H1 (cell line): ENCODE measurements at regions of chr19 and their contacts with region 1.

Region 1: DNA sequence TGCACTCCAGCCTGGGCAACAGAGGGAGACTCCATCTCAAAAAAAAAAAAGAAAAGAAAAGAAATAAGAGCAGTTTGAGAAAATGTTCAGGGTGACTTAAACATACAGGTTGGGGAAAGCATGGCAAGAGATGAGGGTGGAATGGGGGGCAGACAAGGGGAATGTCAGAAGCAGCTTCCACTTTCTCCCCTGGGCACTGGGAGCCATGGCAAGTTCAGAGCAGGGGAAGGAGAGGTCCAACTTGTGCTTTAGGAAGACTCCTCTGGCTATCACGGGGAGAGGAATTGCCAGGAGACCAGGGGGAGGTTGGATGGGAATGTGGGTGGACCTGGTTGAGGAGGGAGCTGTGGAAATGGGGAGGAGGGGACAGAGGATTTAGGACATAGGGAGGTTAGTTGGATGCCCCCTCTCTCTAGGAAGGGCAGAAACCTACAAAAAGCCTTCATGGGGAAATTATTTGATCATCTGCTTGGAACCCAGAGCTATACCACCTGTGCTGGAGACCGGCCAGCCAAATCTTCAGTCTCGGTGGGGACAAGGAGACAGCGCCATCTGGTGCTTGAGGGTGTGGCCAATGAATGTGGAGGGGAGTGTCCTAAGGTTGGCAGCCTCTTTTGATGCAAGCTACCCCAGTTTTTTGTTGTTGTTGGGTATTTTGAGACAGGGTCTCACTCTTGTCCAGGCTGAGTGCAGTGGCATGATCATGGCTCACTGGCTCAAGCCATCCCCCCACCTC is 7.3 kb upstream of the STRN4 start:
- DNase-seq: peak in 1 of 2 experiments; percentile 78
- H3K4me3 ChIP-seq: no peak overlapping the region
- H3K27ac ChIP-seq: no peak overlapping the region
- H3K4me1 ChIP-seq: no peaks in the 10 kb centered on the region; a peak in 2 of 7 replicates
- H3K27me3 ChIP-seq: no peaks in the 10 kb centered on the region
- CTCF ChIP-seq: peak; percentile 73 to 80 (median 78)
- EP300 ChIP-seq: no peak
- POLR2A ChIP-seq: no peak
- RAD21 ChIP-seq: peak; percentile 45 to 53

Region 2: DNA sequence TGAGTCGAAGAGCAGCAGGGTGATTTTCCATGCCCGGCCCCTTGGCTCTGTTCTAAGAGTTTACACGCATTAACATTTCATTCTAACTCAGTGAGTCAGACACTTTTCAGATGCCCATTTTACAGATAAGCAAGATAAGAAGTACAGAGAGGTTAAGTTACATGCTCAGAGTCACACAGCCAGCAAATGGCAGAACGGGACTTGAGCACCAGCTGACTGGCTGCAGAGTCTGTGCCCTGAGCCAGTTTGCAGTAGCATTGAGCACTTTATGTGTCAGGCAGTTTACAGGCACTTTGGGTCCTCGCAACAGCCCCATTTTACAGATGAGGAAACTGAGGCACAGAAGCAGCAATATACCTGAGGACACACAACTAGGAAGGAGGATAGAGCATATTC is 359.2 kb before region 1 on chr19:
- CTCF ChIA-PET with region 1: no interaction called
- POLR2A ChIA-PET with region 1: no interaction called
- DNase-seq: no peak
- H3K4me3 ChIP-seq: no peak overlapping the region
- H3K27ac ChIP-seq: no peak overlapping the region
- H3K4me1 ChIP-seq: no peaks in the 10 kb centered on the region; a peak in 2 of 7 replicates
- H3K27me3 ChIP-seq: no peaks in the 10 kb centered on the region
- CTCF ChIP-seq: no peak
- EP300 ChIP-seq: no peak
- POLR2A ChIP-seq: no peak
- RAD21 ChIP-seq: no peak

Region 3: DNA sequence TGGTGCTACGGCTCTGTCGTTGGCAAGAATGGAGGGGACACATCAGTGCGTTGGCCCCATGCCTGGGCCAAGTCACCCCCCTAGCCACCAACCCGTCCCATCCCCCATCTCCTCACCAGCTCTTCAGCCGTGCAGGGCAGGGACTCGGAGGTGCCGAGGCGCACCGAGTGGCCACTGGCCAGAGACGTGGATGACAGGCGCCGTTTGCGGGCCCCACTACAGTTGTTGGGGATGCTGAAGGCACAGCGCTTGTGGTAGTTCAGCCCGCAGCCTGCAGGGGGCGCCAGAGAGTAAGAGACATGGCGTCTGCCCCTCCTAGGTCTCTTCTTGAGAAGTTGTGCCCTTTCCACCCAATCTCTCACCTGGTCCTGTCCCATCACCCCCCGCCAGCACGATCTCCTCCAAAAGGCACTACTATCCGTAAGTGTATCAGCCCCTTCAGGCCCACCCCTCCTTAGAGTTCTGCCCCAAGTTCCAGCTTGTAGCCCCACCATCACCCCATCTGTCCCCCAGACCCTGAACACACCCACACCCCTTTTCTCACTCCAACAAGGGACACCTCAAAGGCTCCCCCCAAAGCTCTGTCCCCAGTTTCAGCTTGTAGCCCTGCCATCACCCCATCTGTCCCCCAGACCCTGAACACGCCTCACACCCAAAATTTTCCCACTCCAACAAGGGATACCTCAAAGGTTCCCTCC is 49.1 kb before region 1 on chr19:
- CTCF ChIA-PET with region 1: interaction called, 29 read pairs
- POLR2A ChIA-PET with region 1: no interaction called
- DNase-seq: peak in 1 of 2 experiments; percentile 100
- H3K4me3 ChIP-seq: no peak overlapping the region
- H3K27ac ChIP-seq: no peak overlapping the region
- H3K4me1 ChIP-seq: peaks cover 0 to 1% (median 0%) of the 10 kb centered on the region in 4 experiments; a peak in 1 of 7 replicates
- H3K27me3 ChIP-seq: no peaks in the 10 kb centered on the region
- CTCF ChIP-seq: peak; percentile 89 to 96 (median 89)
- EP300 ChIP-seq: no peak
- POLR2A ChIP-seq: no peak; a peak in 1 of 3 replicates
- RAD21 ChIP-seq: peak; percentile 63 to 64

Region 4: DNA sequence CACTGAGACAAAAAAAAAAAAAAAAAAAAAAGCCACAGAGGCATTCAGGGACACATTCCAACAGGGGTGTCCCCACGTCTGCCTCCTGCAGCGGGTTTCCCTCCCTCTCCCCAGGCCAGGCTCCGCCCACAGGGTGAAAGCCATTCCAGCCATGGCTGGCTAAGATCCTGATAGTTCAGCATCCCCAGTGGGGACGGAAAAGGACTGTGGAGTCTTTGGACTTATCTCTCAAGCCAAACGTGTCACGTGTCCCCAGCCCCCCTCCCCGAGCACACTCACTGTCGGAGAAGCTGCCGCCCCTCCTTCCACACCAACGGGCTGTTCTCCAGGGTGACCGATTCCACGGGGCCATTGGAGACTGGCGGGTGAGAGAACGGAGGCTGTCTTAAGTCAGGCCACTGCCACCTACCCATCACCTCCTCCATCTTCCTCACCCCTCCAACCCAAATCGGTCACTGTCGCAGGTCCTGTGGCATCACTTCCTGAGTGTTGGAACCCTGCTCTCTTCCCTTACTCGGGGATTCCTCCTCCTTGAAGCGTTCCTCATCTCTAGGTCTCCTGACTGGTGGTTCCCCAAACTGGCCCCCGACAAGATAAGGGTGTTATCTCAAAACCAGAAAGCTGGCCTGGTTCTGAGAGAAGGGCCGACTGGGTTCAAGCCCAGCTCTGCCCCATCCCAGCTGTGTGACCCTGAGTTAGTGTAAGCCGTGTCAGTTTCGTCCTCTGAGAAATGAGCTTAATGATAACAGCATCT is 16.9 kb before region 1 on chr19:
- CTCF ChIA-PET with region 1: interaction called, 13 read pairs
- POLR2A ChIA-PET with region 1: interaction called, 3 read pairs
- DNase-seq: no peak
- H3K4me3 ChIP-seq: no peak overlapping the region
- H3K27ac ChIP-seq: no peak overlapping the region
- H3K4me1 ChIP-seq: peaks cover 0 to 6% (median 2%) of the 10 kb centered on the region in 4 experiments; a peak in 3 of 7 replicates
- H3K27me3 ChIP-seq: no peaks in the 10 kb centered on the region
- CTCF ChIP-seq: no peak
- EP300 ChIP-seq: no peak
- POLR2A ChIP-seq: no peak
- RAD21 ChIP-seq: no peak

Region 5: GRCh38 chr19:46766569-46767317 is 13.2 kb after region 1 on chr19:
- CTCF ChIA-PET with region 1: interaction called, 176 read pairs
- POLR2A ChIA-PET with region 1: interaction called, 16 read pairs
- DNase-seq: peak in 1 of 2 experiments; percentile 84
- H3K4me3 ChIP-seq: no peak overlapping the region
- H3K27ac ChIP-seq: no peak overlapping the region
- H3K4me1 ChIP-seq: no peaks in the 10 kb centered on the region
- H3K27me3 ChIP-seq: no peaks in the 10 kb centered on the region
- CTCF ChIP-seq: peak; percentile 83 to 95 (median 91)
- EP300 ChIP-seq: peak in 1 of 2 experiments; percentile 24; a peak in 1 of 3 replicates
- POLR2A ChIP-seq: no peak
- RAD21 ChIP-seq: peak; percentile 51 to 67

Region 6: DNA sequence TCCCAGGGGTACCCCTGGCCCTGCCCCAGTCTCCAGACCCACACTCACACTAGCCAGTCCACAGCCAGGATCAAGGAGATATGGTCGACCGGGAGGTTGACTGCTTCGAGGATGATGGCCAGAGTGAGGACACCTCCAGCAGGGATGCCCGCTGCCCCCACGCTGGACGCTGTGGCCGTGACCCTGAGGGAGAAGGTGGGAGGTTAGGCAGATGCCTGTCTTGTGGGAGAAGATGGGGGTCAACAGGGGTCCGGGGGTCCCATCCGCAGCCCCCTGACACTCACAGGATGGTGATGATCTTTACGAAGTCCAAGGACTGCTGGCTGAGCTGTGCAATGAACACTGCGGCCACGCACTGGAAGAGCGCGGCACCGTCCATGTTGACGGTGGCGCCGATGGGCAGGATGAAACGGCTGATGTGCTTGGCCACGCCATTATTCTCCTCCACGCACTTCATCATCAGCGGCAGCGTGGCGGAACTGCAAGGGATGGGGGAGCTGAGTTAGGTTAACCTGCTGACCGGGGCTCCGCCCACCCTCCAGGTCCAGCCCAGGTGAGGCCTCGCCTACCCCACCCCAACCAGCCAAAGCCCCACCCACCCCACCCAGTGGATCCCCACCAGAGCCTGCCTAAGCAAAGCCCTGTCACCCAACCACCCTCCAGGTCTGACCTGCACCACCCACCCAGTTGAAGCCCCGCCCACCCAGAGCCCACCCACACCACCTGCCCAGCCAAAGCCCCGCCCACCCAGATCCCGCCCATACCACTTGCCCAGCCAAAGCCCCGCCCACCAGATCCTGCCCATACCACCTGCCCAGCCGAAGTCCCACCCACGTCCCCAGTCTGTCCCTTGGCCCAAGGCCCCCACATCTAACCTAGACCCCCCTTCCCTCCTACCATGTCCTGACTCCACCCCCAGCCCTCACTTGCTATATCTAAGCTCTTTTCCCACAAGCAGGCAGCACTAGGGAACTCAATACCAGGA is 23.6 kb after region 1 on chr19:
- CTCF ChIA-PET with region 1: interaction called, 176 read pairs
- POLR2A ChIA-PET with region 1: interaction called, 11 read pairs
- DNase-seq: peak; percentile 60 to 79
- H3K4me3 ChIP-seq: no peak overlapping the region
- H3K27ac ChIP-seq: no peak overlapping the region
- H3K4me1 ChIP-seq: peaks cover 0 to 1% (median 0%) of the 10 kb centered on the region in 4 experiments; a peak in 1 of 7 replicates
- H3K27me3 ChIP-seq: no peaks in the 10 kb centered on the region
- CTCF ChIP-seq: no peak
- EP300 ChIP-seq: no peak
- POLR2A ChIP-seq: no peak
- RAD21 ChIP-seq: no peak

Region 7: DNA sequence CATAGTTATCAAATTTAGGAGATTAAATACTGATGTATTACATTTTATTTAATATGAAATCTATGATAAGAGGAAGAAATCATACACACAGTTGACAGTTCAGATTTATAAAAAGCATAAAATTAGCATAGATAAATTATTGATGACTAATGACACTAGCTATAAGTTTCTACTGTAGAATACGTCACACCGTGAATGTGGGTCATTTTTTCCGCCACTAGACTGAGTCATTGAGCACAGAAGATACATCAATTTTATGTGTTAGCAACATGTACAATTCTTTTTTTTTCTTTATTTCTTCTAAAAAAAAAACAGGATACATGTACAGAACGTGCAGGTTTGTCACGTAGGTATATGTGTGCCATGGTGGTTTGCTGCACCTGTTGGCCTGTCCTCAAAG is 74.9 kb after region 1 on chr19:
- CTCF ChIA-PET with region 1: interaction called, 11 read pairs
- POLR2A ChIA-PET with region 1: no interaction called
- DNase-seq: no peak
- H3K4me3 ChIP-seq: no peak overlapping the region
- H3K27ac ChIP-seq: no peak overlapping the region
- H3K4me1 ChIP-seq: 0 out of 7 replicates have a peak, but pooled peaks cover 0 to 2% (median 0%) of the 10 kb centered on the region in 4 experiments
- H3K27me3 ChIP-seq: no peaks in the 10 kb centered on the region
- CTCF ChIP-seq: no peak
- EP300 ChIP-seq: no peak
- POLR2A ChIP-seq: no peak
- RAD21 ChIP-seq: no peak